Left colon (tissue), 2 donors: ENCODE measurements at regions of chr1 and their contacts with region 1.

Region 1: DNA sequence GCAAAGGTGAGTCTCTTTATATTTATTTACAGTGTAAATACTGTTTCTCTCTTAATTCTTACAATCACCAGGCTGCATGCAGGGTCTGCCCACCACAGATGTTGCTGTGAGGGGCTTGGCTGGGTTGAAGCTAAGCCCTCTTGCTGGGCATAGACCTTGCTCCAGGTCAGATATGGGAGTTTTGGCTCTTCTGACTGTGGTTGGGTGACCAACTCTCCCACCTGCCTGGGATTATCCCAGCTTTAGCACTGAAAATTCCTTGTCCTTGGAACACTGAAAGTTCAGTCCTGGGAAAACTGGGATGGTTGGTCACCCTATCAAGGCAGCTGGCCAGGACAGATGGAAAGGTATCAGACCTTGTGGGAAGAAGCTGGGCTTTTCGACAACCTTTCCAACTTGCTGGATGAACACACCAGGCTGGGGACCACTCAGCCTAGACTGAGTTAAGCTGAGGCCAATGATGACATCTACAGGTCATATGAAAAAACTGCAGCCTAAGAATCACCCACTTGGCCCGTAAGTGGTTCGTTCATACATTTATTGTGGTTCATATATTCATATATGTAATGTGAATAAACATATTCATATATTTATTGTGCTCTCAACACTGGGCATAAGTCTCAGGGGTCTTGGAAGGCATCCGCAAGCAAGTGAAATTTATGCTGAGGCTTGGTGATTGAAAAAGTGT is 26.6 kb upstream of the HPDL start:
- DNase-seq: peak in 1 of 2 donors; percentile 31
- ATAC-seq: no peak

Region 2: GRCh38 chr1:45018599-45019230 is 281.4 kb before region 1 on chr1:
- intact Hi-C with region 1: loop called (anchors 2 to 5 kb)
- DNase-seq: peak; percentile 57 to 77
- ATAC-seq: peak; percentile 94

Region 3: GRCh38 chr1:45238846-45239245 is 61.3 kb before region 1 on chr1:
- intact Hi-C with region 1: no loop called
- DNase-seq: no peak
- ATAC-seq: no peak

Region 4: GRCh38 chr1:45375104-45376090 is 75.3 kb after region 1 on chr1:
- intact Hi-C with region 1: no loop called
- DNase-seq: no peak
- ATAC-seq: no peak

Region 5: DNA sequence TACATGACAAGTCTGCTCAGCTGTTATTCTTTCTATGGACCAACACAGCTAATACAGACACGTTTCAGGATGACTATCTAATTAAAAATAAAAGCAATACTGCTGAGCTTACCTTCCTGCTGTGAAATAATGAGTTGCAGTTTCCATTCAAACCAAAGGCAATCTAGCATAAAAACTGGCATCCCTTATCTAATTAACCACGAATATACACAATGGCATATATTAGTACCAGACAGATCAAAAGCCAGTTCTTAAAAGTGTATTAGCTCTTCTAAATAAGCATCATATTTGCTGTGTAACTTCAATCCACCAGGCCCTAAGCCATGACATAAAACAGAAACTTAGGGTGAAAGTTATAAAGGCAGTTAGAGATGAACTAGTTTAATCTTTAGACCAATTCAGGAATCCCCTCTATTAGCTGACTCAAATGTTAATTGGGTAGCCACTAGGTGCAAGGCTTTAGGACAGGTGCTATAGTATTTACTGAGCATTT is 170.2 kb after region 1 on chr1:
- intact Hi-C with region 1: no loop called
- DNase-seq: no peak
- ATAC-seq: no peak